Right ventricle myocardium inferior (tissue), 1 donor: ENCODE measurements at regions of chr7 and their contacts with region 1.

Region 1: GRCh38 chr7:106064771-106065585 is 47.1 kb downstream of the SYPL1 start:
- DNase-seq: peak; percentile 86
- ATAC-seq: peak; percentile 91

Region 2: GRCh38 chr7:105963038-105963667 is 101.8 kb before region 1 on chr7 and contains the start of gene CDHR3:
- intact Hi-C with region 1: no loop called
- DNase-seq: no peak
- ATAC-seq: peak; percentile 92
- total RNA-seq, gene CDHR3: 3.6 TPM

Region 3: GRCh38 chr7:106009403-106010226 is 55.4 kb before region 1 on chr7:
- intact Hi-C with region 1: no loop called
- DNase-seq: peak; percentile 90
- ATAC-seq: peak; percentile 93

Region 4: DNA sequence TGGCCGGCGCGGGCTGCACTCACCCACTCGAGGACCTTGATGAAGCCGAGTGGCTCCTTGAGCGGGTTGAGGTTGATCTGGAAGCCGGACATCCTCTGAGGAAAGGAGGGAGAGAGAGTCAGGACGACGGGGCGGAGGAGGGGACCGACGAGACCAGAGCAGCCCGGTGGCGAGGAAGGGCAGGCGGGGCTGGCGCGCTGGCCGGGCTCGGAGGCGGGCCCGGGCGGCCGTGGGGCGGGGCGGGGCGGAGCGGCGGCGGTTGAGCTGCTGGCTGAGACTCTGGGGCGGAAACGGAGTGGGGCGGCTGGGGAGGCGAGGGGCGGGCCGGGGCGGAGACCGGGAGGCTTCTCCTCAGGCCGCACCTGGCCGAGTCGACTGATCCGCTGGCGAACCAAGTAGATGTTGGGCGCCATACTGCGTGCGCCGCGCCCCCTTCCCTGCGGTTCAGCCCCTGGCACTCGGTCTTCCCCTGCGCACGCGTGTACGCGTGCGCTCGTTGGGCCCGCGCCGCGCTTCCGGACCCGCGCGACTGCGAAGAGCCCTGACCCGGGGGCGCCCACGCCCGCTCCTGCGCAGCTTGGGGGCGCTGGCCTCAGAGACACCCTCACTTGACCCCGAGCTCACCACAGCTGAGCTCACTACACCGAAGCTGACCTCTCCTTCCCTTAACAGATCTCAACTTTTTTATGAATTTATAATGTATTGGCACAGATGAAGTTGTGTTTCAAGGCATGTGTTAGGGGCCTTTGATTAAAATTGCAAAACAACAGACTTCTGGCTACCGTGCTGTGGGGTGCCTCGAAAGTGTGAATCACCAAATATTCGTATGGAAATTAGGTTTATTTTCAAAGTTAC is 47.4 kb after region 1 on chr7 and contains the start of gene SYPL1:
- intact Hi-C with region 1: loop called (anchors 2 kb)
- DNase-seq: peak; percentile 97
- ATAC-seq: peak; percentile 95
- total RNA-seq, gene SYPL1: 89.9 TPM

Region 5: GRCh38 chr7:106216517-106216922 is 151.5 kb after region 1 on chr7:
- intact Hi-C with region 1: loop called (anchors 5 kb)
- DNase-seq: no peak
- ATAC-seq: peak; percentile 80